ENCODE measurements at regions of chr11 and their contacts with region 1.

Region 1: GRCh38 chr11:61627567-61628445 is 46.9 kb upstream of the SYT7 start:
- DNase-seq: peak; percentile 59
- H3K4me3 ChIP-seq: no peak overlapping the region
- H3K27ac ChIP-seq: no peak overlapping the region
- H3K4me1 ChIP-seq: peaks cover 19% of the 10 kb centered on the region
- H3K27me3 ChIP-seq: no peaks in the 10 kb centered on the region
- CTCF ChIP-seq: peak; percentile 89 to 96

Region 2: DNA sequence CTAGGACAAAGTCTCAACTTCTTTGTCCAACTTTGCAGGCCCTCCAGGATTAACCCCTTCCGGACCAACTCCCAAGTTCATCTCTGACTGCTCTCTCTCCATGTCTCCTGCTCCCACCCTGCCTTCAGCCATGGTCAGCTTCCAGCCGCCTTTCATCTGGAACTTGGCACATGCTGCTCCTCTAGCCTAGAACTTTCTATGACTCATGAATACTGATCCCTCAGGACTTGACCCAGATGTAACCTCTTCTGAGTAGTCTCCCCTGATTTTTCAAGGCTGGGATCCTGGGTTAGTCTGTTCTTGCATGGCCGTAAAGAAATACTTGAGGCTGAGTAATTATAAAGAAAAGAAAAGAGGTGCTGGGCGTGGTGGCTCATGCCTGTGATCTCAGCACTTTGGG is 670.6 kb before region 1 on chr11:
- CTCF ChIA-PET with region 1: no interaction called
- dilution Hi-C with region 1: no loop called
- in situ Hi-C with region 1: no loop called
- intact Hi-C with region 1: no loop called
- DNase-seq: peak; percentile 20
- H3K4me3 ChIP-seq: no peak overlapping the region
- H3K27ac ChIP-seq: no peak overlapping the region
- H3K4me1 ChIP-seq: no peaks in the 10 kb centered on the region
- H3K27me3 ChIP-seq: peaks cover 2% of the 10 kb centered on the region
- CTCF ChIP-seq: no peak

Region 3: DNA sequence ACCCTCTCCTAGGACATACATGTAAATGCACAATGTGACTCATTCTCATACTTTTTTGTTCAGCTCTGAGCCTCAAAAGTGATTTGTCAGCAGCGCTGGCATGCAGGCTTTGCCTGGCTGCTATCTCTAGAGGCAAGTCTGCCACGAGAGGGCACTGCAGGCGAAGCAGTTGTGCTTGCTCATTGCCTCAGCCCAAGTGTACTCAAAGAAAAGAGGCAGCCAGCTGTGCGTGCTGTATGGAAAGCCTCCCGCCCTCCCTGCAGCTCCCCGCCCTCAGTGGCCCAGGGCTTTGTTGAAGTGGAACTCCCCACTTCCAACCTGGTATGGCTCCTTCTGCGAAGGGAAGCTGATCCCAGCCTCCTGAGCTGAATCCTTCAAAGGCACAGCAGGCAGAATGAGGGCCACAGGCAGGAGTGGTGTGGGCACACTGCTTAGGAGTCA is 181.6 kb before region 1 on chr11:
- CTCF ChIA-PET with region 1: interaction called, 5 read pairs
- dilution Hi-C with region 1: no loop called
- in situ Hi-C with region 1: loop called in 1 of 2 experiments (anchors 10 kb)
- intact Hi-C with region 1: loop called (anchors 1 kb)
- DNase-seq: peak; percentile 89
- H3K4me3 ChIP-seq: no peak overlapping the region
- H3K27ac ChIP-seq: no peak overlapping the region
- H3K4me1 ChIP-seq: peaks cover 3% of the 10 kb centered on the region
- H3K27me3 ChIP-seq: no peaks in the 10 kb centered on the region
- CTCF ChIP-seq: peak; percentile 95 to 96

Region 4: DNA sequence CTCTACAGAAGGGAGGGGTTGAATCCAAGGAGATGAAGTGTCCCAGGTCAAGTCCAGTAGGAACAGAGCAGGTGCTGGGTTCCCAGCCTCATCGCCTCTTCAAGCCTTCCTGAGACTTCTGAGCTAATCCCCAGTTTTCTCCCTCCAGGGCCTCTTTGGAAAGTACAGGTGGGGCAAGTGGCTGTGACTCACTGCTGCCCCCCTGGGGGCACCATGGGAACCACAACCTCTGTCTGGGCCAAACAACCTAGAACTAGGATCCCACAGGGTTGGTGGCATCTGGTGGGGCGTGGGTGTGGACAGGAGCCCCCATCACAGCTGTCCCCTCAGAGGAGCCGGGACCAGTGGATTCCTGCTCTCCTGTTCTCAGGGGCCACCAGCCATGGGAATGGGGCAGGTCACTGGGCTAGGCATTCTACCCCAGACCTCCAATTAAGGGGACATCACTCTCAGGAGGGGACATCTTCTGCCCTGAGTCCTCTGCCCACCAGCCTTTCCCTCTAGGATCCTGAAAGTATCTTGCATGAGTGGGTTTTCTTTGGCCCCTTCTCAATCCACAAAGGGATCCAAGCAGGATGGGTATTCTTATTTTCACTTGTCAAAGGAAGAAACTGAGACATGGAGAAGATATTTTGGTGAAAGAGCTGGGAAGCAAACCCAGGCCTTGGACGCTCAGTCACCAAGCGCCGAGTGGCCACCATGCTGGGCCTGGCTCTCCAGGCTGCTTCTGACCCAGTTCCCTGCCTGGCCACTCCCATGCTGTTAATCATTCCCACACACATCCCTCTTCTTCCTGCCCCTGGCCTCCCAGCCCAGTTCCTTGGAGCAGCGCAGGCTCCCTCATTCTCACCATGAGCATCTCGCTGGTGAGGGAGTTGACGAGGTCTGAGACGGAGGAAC is 95.4 kb before region 1 on chr11:
- CTCF ChIA-PET with region 1: no interaction called
- dilution Hi-C with region 1: no loop called
- in situ Hi-C with region 1: no loop called
- intact Hi-C with region 1: loop called (anchors 1 kb)
- DNase-seq: peak; percentile 46
- H3K4me3 ChIP-seq: no peak overlapping the region
- H3K27ac ChIP-seq: no peak overlapping the region
- H3K4me1 ChIP-seq: no peaks in the 10 kb centered on the region
- H3K27me3 ChIP-seq: no peaks in the 10 kb centered on the region
- CTCF ChIP-seq: peak; percentile 83 to 84

Region 5: DNA sequence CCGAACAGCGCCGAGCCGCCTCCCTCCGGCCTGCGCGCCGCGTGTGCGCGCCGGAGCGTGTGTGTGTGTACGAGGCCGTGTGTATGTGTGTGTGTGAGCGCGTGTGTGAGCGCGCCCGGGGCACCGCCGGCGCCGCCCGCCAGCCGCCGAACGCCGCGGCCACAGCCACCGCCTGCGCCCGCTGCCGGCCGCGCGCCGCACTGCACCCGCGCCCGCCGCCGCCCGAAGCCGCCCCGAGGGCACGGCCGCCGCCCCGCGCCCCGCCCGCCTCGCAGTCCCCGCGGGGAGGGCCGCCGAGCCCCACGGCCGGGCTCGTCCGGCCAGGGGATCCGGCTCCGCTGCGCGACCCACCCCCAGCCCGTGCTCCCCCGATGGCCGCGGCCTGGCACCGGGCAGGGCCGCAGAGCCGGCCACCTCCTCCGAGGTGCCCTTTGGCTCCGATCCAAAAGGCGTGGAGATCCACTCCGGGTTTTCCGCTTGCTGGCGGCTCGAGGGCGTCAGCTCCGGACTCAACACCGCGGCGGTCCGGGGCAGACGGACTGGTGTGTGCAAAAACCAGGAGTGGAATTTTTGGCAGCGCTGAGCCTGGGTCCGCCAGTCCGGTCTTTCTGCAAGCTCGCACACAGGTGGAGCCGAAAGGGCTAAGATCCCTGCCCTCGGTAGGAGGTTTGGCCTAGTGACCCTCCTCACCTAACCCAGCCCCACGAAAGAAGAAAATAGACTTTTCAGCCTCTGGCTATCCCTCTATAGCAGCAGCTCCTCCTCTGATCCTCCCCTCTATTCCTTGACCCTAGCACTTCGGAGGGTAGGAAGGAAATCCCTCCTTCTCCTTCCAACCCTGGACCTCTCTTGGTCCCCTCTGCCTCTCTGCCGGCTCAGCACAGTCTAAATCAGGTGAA is 46.5 kb before region 1 on chr11 and contains the start of gene SYT7:
- CTCF ChIA-PET with region 1: interaction called, 7 read pairs
- dilution Hi-C with region 1: loop called (anchors 5 kb)
- in situ Hi-C with region 1: no loop called
- intact Hi-C with region 1: loop called (anchors 1 kb)
- DNase-seq: peak; percentile 96
- H3K4me3 ChIP-seq: peak within 1 kb of the TSS; percentile 55 to 80 (median 58)
- H3K27ac ChIP-seq: no peak within 1 kb of the TSS
- H3K4me1 ChIP-seq: peaks cover 8% of the 10 kb centered on the region
- H3K27me3 ChIP-seq: peaks cover 12% of the 10 kb centered on the region
- CTCF ChIP-seq: peak; percentile 5 to 21
- total RNA-seq, gene SYT7: 4.7 to 17.7 TPM

Region 6: GRCh38 chr11:61616434-61616833 is 11.4 kb before region 1 on chr11:
- CTCF ChIA-PET with region 1: no interaction called
- dilution Hi-C with region 1: no loop called
- in situ Hi-C with region 1: no loop called
- intact Hi-C with region 1: loop called (anchors 1 kb)
- DNase-seq: peak; percentile 68
- H3K4me3 ChIP-seq: no peak overlapping the region
- H3K27ac ChIP-seq: peak overlapping the region; percentile 56
- H3K4me1 ChIP-seq: peaks cover 22% of the 10 kb centered on the region
- H3K27me3 ChIP-seq: no peaks in the 10 kb centered on the region
- CTCF ChIP-seq: no peak

Measured in mammary epithelial cell (primary cell).